HEK293T (cell line): ENCODE measurements at regions of chr20 and their contacts with region 1.

Region 1: GRCh38 chr20:31851240-31851955 is 6.0 kb upstream of the FOXS1 start:
- DNase-seq: no peak

Region 2: GRCh38 chr20:31835977-31836852 is 15.2 kb before region 1 on chr20:
- CTCF ChIA-PET with region 1: no interaction called
- POLR2A ChIA-PET with region 1: no interaction called
- DNase-seq: peak; percentile 34

Region 3: DNA sequence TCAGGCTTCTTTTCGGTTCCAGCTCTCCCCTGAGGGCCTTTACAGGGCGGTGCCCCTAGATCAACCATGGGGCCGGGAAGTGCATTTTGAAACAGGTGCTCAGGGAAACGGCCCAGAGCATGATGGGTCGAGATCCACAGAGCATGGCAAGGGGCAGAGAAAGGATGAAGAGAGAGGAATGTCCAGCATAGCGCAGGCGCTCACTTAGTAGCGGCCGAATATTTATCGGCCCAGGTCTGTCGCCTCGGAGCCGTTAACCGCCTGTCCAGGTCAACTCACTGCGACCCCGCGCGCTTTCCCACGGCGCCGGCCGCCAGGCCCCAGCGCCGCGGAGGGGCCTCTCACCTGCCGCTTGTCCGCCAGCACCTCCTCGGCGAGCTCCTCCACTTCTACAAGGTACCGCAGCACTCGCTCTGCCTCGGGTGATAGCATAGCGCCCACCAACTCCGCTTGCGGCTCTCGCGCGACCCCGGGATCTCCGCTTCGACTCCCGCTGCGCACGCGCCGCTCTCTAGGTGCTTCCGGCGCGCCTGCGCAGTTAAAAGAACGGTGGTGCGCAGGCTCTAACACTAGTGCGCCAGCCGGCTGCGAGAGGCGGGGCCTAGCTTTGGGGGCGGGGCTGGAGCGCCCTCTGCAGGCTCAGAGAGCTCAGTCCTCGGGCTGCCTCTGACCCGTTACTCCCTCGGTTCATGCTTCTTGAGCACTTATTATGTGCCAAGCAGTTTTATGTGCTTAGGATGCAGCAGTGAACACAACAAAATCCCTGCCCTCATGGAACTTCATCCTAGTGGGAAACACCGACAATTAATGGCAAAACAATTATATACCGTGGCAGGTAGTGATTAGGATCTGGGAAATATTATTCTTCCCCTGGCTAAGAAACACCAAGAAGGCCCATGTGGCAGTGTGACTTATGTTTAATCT is 100.4 kb after region 1 on chr20 and contains the start of gene PDRG1:
- CTCF ChIA-PET with region 1: interaction called, 22 read pairs
- POLR2A ChIA-PET with region 1: interaction called, 10 read pairs
- DNase-seq: peak; percentile 97